ENCODE measurements at regions of chr2 and their contacts with region 1.

Region 1: GRCh38 chr2:30336978-30337841 is 105.9 kb downstream of the LBH start:
- DNase-seq: peak in 8 of 10 donors; percentile 27 to 73 (median 60)
- ATAC-seq: peak; percentile 83 to 85
- H3K4me3 Mint-ChIP-seq: peak overlapping the region; percentile 76 to 92 (median 84)
- H3K27ac Mint-ChIP-seq: peak overlapping the region; percentile 94 to 100 (median 98)
- H3K4me1 Mint-ChIP-seq: peaks cover 63 to 92% (median 85%) of the 10 kb centered on the region in 4 donors
- H3K27me3 Mint-ChIP-seq: no peaks in the 10 kb centered on the region

Region 2: DNA sequence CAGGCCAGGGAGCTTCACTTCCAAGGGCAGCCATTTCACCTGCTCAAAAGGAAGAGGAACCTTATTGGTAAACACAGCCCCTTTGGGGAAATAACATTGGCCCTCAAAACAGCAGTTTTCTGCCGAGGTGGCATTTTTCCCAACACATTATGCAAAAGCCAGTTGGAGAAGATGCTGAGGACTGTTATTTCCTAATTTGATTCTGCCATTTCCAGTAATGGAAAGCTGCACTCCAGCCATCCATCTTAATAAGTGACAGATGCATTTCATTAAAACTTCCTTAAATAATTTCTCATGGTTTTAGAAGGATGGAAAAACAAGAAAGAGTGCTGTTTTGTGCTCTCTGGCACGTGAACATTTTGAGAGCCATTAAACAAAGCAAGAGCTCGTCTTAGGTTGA is 359.9 kb before region 1 on chr2:
- POLR2A ChIA-PET with region 1: no interaction called
- DNase-seq: no peak
- ATAC-seq: no peak
- H3K4me3 Mint-ChIP-seq: no peak overlapping the region
- H3K27ac Mint-ChIP-seq: no peak overlapping the region
- H3K4me1 Mint-ChIP-seq: no peaks in the 10 kb centered on the region
- H3K27me3 Mint-ChIP-seq: peaks cover 0 to 10% (median 4%) of the 10 kb centered on the region in 5 donors

Region 3: DNA sequence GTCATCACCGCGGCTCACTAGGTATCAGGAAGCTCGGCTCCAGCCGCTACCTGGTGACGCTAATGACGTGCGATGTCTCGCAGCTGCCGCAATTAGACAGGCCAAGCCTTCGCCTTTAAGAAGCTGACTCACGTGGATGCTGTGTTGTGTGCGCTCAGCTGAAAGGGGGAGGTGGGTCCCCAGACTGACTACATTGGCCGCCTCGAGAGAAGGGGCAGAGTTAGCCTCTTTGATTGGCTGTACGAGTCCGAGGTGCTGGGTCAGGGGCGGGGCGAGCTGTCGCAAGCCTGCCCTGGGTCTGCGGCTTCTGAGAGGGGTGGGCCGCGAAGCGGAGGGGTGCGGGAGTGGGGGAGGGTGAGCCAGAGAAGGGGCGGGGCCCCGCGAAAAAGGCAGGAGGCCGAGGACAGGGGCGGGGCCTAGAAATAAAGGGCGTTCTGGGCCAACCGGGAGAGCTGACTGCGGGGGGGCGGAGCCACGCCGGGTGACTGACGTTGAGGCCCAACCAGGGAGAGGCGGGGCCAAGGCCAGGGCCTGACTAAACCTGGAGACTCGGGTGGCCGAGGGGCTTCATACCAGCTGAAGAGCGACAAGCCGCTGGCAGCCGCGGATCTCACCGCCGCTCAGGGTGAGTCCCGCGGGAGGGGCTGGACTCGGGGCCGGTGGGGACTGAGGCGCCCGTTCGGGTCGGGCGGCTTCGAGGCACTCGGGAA is 190.6 kb before region 1 on chr2 and contains the start of gene YPEL5:
- POLR2A ChIA-PET with region 1: interaction called, 13 read pairs
- DNase-seq: peak; percentile 95 to 100 (median 100)
- ATAC-seq: peak; percentile 81 to 82
- H3K4me3 Mint-ChIP-seq: peak within 1 kb of the TSS; percentile 81 to 95 (median 90)
- H3K27ac Mint-ChIP-seq: peak within 1 kb of the TSS; percentile 99 to 100 (median 100)
- H3K4me1 Mint-ChIP-seq: peaks cover 25 to 54% (median 50%) of the 10 kb centered on the region in 4 donors
- H3K27me3 Mint-ChIP-seq: no peaks in the 10 kb centered on the region
- polyA plus RNA-seq, gene YPEL5: 88.3 to 155 (median 103) TPM

Region 4: GRCh38 chr2:30231212-30231995 is 105.8 kb before region 1 on chr2 and contains the start of gene LBH:
- POLR2A ChIA-PET with region 1: interaction called, 211 read pairs
- DNase-seq: peak; percentile 86 to 96 (median 90)
- ATAC-seq: peak; percentile 44 to 48
- H3K4me3 Mint-ChIP-seq: peak within 1 kb of the TSS; percentile 91 to 99 (median 95)
- H3K27ac Mint-ChIP-seq: peak within 1 kb of the TSS; percentile 83 to 100 (median 94)
- H3K4me1 Mint-ChIP-seq: peaks cover 31 to 65% (median 59%) of the 10 kb centered on the region in 4 donors
- H3K27me3 Mint-ChIP-seq: no peaks in the 10 kb centered on the region
- polyA plus RNA-seq, gene LBH: 243 to 356 (median 307) TPM

Region 5: DNA sequence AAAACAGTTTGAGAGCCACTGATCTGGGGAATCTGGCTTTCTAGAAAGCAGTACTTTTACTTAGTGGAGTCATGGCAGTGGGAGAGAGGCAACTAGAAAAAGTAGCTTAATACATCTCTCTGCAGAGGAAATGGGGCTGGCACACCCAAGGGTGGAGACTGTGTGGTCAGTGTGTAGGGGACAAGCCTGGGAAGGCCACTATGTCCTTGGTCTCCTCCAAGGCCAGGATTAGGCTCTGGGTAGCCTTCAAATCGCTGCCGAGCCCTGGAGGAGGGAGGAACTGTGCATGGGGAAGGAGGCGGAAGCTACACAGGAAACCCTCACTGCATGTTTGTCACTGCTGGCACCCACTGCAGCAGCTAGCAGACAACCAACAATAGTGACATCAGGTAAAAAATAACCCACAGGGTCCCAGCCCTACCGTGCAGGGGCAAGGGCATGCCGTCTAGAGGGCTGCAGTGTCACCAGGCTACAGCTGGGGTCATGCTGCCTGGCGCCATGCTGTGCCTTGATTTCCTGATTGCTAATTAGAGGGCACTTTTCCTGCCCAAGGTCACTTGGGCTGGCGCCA is 71.1 kb before region 1 on chr2:
- POLR2A ChIA-PET with region 1: interaction called, 30 read pairs
- DNase-seq: peak; percentile 35 to 83 (median 68)
- ATAC-seq: peak; percentile 88 to 97
- H3K4me3 Mint-ChIP-seq: peak overlapping the region; percentile 64 to 90 (median 85)
- H3K27ac Mint-ChIP-seq: peak overlapping the region; percentile 90 to 99 (median 98)
- H3K4me1 Mint-ChIP-seq: peaks cover 37 to 96% (median 90%) of the 10 kb centered on the region in 4 donors
- H3K27me3 Mint-ChIP-seq: no peaks in the 10 kb centered on the region

Region 6: GRCh38 chr2:30293303-30293921 is 43.8 kb before region 1 on chr2:
- POLR2A ChIA-PET with region 1: no interaction called
- DNase-seq: no peak
- ATAC-seq: no peak
- H3K4me3 Mint-ChIP-seq: peak overlapping the region in 1 of 10 donors; percentile 41
- H3K27ac Mint-ChIP-seq: peak overlapping the region in 3 of 10 donors; percentile 11 to 78 (median 61)
- H3K4me1 Mint-ChIP-seq: peaks cover 13 to 64% (median 18%) of the 10 kb centered on the region in 4 donors
- H3K27me3 Mint-ChIP-seq: no peaks in the 10 kb centered on the region

Region 7: GRCh38 chr2:30325600-30326328 is 11.4 kb before region 1 on chr2:
- POLR2A ChIA-PET with region 1: interaction called, 24 read pairs
- DNase-seq: peak in 2 of 10 donors; percentile 5 to 30
- ATAC-seq: peak; percentile 81 to 83
- H3K4me3 Mint-ChIP-seq: peak overlapping the region in 8 of 10 donors; percentile 26 to 77 (median 56)
- H3K27ac Mint-ChIP-seq: peak overlapping the region; percentile 81 to 94 (median 87)
- H3K4me1 Mint-ChIP-seq: peaks cover 16 to 50% (median 46%) of the 10 kb centered on the region in 4 donors
- H3K27me3 Mint-ChIP-seq: no peaks in the 10 kb centered on the region

Region 8: DNA sequence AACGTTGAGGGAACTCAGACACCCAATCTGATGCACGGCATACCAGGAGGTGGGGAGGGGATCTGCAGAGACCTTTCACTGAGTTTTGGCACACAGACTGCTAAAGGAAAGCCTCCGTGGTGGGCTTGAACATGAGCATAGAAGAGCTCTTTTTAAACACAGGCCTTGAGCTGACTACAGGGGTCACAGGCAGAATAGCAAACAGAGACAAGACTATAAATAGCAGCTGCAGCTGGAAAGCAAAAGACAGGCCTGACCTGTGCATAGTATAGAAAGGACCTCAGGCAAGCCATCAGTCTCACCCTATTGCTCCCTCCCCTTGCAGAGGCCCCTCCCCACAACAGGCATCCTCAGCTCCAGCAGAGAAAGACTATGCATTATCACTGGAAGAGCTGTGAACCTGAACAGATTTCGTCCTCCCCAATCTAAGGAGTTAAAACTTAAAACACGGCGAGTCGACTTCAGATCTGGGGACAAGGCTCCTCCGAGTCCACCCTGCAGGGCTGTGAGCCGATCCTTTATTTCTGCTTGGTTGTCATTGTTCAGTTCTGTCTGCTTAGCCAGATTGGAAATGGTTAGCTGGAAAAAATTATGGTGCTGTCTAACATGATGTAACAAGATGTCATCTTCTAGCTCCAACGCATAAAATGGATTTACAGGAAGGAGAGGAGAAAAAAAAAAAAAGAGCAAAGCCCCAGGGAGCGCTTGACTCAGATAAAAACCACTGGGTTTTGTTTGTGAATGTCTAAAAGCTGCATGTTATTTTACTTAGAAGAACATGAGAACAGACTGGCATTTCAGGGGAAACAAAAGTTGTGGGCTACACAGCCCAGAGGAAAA is 84.6 kb after region 1 on chr2:
- POLR2A ChIA-PET with region 1: interaction called, 36 read pairs
- DNase-seq: peak in 7 of 10 donors; percentile 22 to 76 (median 60)
- ATAC-seq: peak; percentile 66 to 70
- H3K4me3 Mint-ChIP-seq: peak overlapping the region; percentile 59 to 82 (median 70)
- H3K27ac Mint-ChIP-seq: peak overlapping the region; percentile 88 to 98 (median 93)
- H3K4me1 Mint-ChIP-seq: peaks cover 19 to 53% (median 50%) of the 10 kb centered on the region in 4 donors
- H3K27me3 Mint-ChIP-seq: no peaks in the 10 kb centered on the region